ENCODE measurements at regions of chr20 and their contacts with region 1.

Region 1: DNA sequence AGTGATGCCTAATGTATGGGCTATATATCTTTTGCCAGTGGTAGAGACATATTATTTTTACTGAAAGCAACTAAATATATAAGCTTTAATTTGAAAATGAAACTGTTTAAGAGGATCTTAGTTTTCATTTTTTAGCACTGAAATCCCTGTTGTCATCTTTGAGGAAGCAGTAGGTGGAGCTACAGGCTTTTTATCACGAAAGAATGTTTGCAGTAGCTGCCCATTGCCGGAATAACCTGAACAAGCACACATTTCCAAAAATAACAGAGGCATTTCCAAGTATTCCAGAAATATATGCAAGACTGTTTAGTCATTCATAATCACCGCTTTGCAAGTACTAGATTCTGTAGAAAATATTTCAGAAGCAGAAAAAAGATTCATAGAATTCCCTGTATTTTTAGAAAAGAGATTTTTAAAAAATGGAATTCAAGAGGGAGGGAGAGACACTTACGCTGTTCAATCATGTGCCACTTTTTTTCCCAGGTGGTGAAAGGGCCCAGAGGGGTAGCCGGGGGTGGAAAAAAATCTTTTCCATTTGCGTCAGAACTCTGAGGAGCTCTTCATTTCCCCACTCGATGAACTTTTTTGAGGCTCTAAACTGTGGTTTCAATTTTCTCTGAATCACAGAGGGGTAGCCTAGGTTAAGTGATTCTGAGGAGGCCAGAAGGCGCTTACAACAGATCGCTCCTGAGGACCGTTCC is 142.5 kb upstream of the FERMT1 start:
- DNase-seq: peak; percentile 41
- H3K4me3 ChIP-seq: peak overlapping the region in 2 of 3 experiments; percentile 17 to 35
- H3K27ac ChIP-seq: peak overlapping the region; percentile 10
- H3K4me1 ChIP-seq: peaks cover 9% of the 10 kb centered on the region
- H3K27me3 ChIP-seq: no peaks in the 10 kb centered on the region
- CTCF ChIP-seq: peak; percentile 65 to 70

Region 2: GRCh38 chr20:6178537-6178936 is 86.8 kb before region 1 on chr20:
- CTCF ChIA-PET with region 1: no interaction called
- dilution Hi-C with region 1: no loop called
- in situ Hi-C with region 1: no loop called
- intact Hi-C with region 1: loop called (anchors 5 kb)
- DNase-seq: peak; percentile 32
- H3K4me3 ChIP-seq: no peak overlapping the region
- H3K27ac ChIP-seq: no peak overlapping the region
- H3K4me1 ChIP-seq: no peaks in the 10 kb centered on the region
- H3K27me3 ChIP-seq: peaks cover 3% of the 10 kb centered on the region
- CTCF ChIP-seq: peak; percentile 36 to 64

Region 3: DNA sequence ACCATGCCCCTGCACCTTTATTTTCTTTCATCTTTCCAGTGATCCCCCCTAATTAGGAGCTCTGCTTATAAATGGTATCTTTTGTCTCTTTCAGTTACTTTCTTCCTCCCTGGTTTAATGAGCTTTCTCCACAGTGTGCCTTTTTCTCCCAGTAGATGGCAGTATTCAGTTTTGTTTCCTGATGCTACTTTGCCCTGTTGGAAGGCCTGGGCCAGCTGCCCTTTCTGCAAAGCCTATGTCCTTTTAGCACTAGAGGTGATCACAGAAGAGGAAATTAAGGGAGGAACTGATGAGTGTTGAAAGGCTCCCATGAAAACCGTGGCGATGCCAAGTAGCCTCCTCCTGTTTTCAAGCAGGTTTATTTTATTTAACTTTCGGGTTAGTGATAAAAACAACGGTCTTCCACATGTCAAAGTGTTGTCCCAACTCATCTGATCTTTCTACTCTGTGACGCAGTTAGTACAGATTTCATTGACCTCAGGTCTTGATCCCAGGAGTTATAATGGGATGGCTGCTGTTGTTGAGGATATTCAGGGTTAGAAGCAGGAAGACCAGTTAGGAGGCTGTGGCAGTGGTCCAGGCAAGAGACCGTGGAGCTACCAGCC is 317.9 kb after region 1 on chr20:
- CTCF ChIA-PET with region 1: interaction called, 3 read pairs
- dilution Hi-C with region 1: no loop called
- in situ Hi-C with region 1: loop called in 1 of 2 experiments (anchors 25 kb)
- intact Hi-C with region 1: loop called (anchors 1 kb)
- DNase-seq: peak; percentile 58
- H3K4me3 ChIP-seq: no peak overlapping the region
- H3K27ac ChIP-seq: no peak overlapping the region
- H3K4me1 ChIP-seq: peaks cover 10% of the 10 kb centered on the region
- H3K27me3 ChIP-seq: no peaks in the 10 kb centered on the region
- CTCF ChIP-seq: peak; percentile 72 to 80

Region 4: DNA sequence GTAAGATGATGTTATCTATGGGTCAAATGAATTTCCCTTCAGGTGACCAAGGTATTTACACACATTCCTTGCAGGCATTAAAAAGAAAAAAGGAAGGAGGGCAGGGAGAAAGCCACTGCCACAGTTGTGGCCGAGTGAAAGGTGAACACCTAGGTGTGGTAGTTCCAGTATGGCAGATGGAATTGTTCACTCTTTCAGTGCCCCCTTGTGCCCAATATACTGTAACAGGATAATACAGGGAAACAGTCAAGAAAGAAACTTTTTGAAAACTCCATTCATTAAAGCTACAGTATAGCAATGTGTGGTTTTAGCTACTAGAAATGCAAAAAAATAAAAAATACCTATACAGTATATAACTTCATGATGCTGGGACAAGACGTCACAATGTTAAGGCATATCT is 554.3 kb after region 1 on chr20:
- CTCF ChIA-PET with region 1: no interaction called
- dilution Hi-C with region 1: no loop called
- in situ Hi-C with region 1: no loop called
- intact Hi-C with region 1: loop called (anchors 1 kb)
- DNase-seq: no peak
- H3K4me3 ChIP-seq: no peak overlapping the region
- H3K27ac ChIP-seq: no peak overlapping the region
- H3K4me1 ChIP-seq: no peaks in the 10 kb centered on the region
- H3K27me3 ChIP-seq: no peaks in the 10 kb centered on the region
- CTCF ChIP-seq: peak; percentile 44

Region 5: DNA sequence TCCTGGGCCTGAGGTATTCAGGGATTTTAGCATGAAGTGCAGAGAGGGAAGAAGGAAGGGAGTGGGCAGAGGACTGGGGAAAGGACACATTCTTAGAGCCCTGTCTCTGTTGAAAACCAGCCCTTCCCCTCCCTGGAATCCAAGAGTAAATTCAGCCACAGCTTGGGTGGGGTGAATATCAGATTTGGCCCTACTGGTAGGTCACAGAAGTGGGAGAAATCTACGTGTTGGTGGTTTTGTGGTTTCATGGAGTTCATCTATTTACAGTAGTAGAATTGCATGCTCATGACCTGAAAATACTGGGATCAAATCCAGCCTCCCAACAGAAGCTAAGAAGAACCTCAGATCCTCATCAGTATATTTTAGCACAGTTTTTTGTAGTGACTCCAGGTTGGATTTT is 906.6 kb after region 1 on chr20:
- CTCF ChIA-PET with region 1: no interaction called
- dilution Hi-C with region 1: no loop called
- in situ Hi-C with region 1: no loop called
- intact Hi-C with region 1: loop called (anchors 5 kb)
- DNase-seq: peak; percentile 67
- H3K4me3 ChIP-seq: no peak overlapping the region
- H3K27ac ChIP-seq: no peak overlapping the region
- H3K4me1 ChIP-seq: peaks cover 8% of the 10 kb centered on the region
- H3K27me3 ChIP-seq: no peaks in the 10 kb centered on the region
- CTCF ChIP-seq: no peak